A549 (cell line): ENCODE measurements at regions of chr17 and their contacts with region 1.

Region 1: DNA sequence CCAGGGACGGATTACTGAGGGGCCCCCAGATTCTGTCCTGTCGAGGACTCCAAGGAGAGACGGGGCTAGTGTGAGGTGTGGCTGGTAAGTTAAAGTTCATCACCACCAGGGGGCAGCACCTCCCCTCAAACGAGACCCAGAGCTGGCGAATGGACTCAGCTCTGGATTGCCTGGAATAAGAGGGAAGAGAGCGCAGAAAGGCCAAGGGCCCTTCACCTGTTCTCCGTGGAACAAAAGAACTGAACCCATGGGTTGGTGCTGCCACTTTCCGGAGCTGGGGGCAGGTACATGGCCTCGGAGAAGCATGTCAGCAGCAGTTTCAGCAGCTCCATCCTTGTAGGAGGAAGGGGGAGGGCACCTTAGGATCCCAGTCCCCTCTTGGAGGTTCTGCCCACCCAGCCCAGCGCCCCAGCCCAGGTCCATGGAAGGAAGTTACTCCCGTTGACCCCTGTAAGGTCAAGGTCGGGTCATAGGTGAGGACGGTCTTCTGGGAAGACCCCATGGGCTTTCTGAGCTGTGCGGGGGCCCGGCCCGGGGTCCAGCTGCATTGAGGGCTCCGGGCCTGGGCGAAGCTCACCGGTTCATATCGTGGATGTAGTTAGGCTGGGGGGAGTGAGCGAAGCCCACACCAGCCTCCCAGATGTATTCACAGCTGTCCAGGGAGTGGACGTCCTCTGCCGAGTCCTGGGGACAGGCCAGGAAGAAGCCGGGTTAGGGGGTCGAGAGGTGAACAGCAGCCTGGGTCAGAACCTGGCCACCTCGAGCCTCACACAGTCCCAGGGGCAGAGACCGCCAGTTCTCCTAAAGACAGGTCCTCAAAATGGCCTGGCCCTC is 10.7 kb downstream of the HID1 start:
- DNase-seq: peak; percentile 91 to 96
- ATAC-seq: peak; percentile 58 to 80
- H3K4me3 ChIP-seq: no peak overlapping the region
- H3K27ac ChIP-seq: 0 out of 6 replicates have a peak overlapping the region, but pooled peaks of 1 of the 2 experiments have one; percentile 9
- H3K4me1 ChIP-seq: peaks cover 12% of the 10 kb centered on the region
- CTCF ChIP-seq: peak; percentile 95
- EP300 ChIP-seq: no peak
- POLR2A ChIP-seq: no peak
- RAD21 ChIP-seq: peak; percentile 97 to 98

Region 2: GRCh38 chr17:74610108-74610507 is 351.8 kb before region 1 on chr17:
- CTCF ChIA-PET with region 1: no interaction called
- POLR2A ChIA-PET with region 1: no interaction called
- DNase-seq: no peak
- ATAC-seq: no peak
- H3K4me3 ChIP-seq: no peak overlapping the region
- H3K27ac ChIP-seq: no peak overlapping the region
- H3K4me1 ChIP-seq: peaks cover 9% of the 10 kb centered on the region
- CTCF ChIP-seq: no peak
- EP300 ChIP-seq: no peak
- POLR2A ChIP-seq: no peak
- RAD21 ChIP-seq: no peak

Region 3: DNA sequence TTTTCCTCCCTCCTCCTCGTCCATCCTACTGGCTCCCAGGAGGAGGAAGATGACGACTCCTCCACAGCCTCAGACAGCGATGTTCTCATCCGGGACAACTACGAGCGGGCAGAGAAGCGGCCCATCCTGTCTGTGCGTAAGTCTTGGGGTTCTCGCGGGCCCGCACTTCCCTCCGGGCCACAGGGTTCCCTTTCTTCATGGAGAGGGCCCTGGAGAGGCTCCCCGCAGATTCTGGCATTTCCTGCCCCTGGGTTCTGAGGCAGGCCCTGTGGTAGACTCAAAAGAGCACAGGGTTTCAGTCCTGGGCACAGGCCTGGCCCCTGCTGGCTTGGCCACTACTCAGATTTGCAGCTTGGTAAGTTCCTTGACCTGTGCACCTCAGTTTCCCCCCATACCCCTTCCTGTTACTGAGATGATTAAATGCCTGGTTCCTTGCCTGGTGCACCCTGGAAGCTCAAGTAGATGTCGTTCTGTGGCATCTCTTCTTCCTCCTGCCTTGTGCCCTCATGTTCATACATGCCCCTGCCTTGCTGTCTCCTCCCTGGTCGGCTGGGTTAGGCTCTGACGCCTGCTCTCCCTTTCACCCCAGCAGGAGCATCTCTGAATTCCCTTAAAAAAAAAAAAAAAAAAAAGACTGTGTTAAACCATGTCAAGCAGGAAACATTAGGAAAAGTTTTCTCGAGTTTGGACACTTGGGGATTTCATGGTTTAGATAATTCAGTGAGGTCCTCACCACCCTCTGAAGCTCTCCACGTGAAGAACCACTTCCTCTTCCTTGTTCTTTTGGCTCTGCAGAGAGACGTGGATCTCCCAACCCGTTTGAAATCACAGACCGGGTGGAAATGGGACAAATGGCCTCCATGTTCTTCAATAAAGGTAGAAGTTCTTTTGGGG is 171.5 kb before region 1 on chr17:
- CTCF ChIA-PET with region 1: interaction called, 21 read pairs
- POLR2A ChIA-PET with region 1: no interaction called
- DNase-seq: no peak
- ATAC-seq: no peak
- H3K4me3 ChIP-seq: no peak overlapping the region
- H3K27ac ChIP-seq: no peak overlapping the region
- H3K4me1 ChIP-seq: no peaks in the 10 kb centered on the region
- CTCF ChIP-seq: no peak
- EP300 ChIP-seq: no peak
- POLR2A ChIP-seq: no peak
- RAD21 ChIP-seq: no peak

Region 4: DNA sequence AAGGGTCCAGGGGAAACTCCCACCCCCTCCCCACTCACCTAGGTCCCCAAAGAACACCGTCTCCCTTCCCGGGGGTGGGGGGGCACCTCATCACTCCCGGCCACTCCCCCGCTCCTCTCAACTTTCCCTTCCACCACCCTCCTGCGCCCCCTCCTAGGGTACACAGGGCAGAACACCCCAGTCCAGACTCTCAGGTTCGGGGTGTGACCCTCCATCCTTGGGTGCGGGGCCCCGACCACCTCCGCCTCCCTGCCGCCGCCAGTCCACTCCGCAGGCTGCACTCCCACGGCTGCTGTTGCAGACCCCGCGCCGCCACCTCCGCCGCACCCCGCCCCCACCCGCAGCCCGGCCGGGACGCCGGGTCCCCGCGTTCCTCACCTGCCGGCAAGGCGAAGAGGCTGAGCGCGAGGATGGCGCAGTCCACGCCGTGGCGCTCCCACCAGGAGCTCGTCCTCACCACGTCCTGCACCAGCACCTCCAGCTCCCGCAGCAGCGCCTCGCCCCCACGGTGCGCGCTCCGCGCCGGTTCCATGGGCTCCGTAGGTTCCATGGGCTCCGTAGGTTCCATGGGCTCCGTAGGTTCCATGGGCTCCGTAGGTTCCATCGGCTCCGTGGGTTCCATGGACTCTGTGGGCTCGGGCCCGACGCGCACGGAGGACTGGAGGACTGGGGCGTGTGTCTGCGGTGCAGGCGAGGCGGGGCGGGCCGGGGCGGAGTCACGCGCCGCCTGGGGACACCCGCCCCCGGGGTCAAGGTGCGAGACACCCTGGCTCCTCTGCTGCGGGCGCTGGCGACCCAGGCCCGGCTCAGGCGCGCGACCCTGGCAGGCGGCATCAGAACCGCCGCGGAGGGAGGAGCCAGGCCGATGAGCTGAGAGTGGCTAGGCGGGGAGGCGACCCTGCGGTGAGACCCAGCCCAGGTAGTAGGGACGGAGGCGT is 68.6 kb before region 1 on chr17 and contains the start of gene FADS6:
- CTCF ChIA-PET with region 1: interaction called, 12 read pairs
- POLR2A ChIA-PET with region 1: no interaction called
- DNase-seq: no peak
- ATAC-seq: peak; percentile 32 to 65; a peak in 4 of 6 replicates
- H3K4me3 ChIP-seq: peak within 1 kb of the TSS; percentile 40
- H3K27ac ChIP-seq: peak within 1 kb of the TSS; percentile 30 to 59; a peak in 4 of 6 replicates
- H3K4me1 ChIP-seq: peaks cover 4% of the 10 kb centered on the region; the same call in 1 of the 3 replicates
- CTCF ChIP-seq: no peak
- EP300 ChIP-seq: no peak
- POLR2A ChIP-seq: no peak
- RAD21 ChIP-seq: no peak
- polyA plus RNA-seq, gene FADS6: not detected in 2 replicates

Region 5: GRCh38 chr17:74981979-74982662 is 20.2 kb after region 1 on chr17:
- CTCF ChIA-PET with region 1: interaction called, 280 read pairs
- POLR2A ChIA-PET with region 1: interaction called, 13 read pairs
- DNase-seq: peak; percentile 76 to 90
- ATAC-seq: peak; percentile 94
- H3K4me3 ChIP-seq: peak overlapping the region; percentile 69
- H3K27ac ChIP-seq: peak overlapping the region; percentile 92 to 94
- H3K4me1 ChIP-seq: peaks cover 23% of the 10 kb centered on the region
- CTCF ChIP-seq: peak; percentile 11; the same call in 1 of the 3 replicates
- EP300 ChIP-seq: no peak
- POLR2A ChIP-seq: peak; percentile 94
- RAD21 ChIP-seq: peak in 1 of 2 experiments; percentile 33; a peak in 1 of 5 replicates

Region 6: DNA sequence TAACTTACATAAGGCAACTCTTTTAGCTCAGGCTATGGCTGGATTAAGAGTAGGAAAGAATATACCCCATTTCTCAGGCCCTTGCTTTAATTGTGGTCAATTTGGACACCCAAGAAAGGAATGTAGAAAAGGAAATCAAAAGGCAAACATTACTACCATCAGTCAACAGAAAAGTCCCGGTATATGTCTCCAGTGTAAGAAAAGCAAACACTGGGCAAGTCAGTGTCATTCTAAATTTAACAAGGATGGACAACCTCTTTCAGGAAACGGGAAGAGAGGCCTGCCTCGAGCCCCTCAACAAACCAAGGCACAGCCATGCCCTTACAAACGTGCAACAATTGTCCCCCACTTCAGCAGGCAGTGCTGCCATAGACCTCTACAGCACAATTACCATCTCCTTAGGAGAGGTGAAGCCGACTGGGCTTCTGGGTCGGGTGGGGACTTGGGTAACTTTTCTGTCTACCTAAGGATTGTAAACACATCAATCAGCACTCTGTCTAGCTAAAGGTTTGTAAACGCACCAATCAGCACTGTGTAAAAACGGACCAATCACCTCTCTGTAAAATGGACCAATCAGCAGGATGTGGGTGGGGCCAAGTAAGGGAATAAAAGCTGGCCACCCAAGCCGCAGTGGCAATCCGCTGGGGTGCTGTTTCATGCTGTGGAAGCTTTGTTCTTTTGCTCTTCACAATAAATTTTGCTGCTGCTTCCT is 63.0 kb after region 1 on chr17:
- CTCF ChIA-PET with region 1: interaction called, 404 read pairs
- POLR2A ChIA-PET with region 1: no interaction called
- DNase-seq: no peak
- ATAC-seq: peak in 1 of 2 experiments; percentile 67; a peak in 3 of 6 replicates
- H3K4me3 ChIP-seq: no peak overlapping the region
- H3K27ac ChIP-seq: no peak overlapping the region
- H3K4me1 ChIP-seq: no peaks in the 10 kb centered on the region
- CTCF ChIP-seq: no peak
- EP300 ChIP-seq: no peak
- POLR2A ChIP-seq: no peak
- RAD21 ChIP-seq: no peak

Region 7: GRCh38 chr17:75124041-75124818 is 162.4 kb after region 1 on chr17:
- CTCF ChIA-PET with region 1: interaction called, 23 read pairs
- POLR2A ChIA-PET with region 1: no interaction called
- DNase-seq: peak; percentile 99 to 100
- ATAC-seq: peak; percentile 93
- H3K4me3 ChIP-seq: peak overlapping the region; percentile 31
- H3K27ac ChIP-seq: peak overlapping the region; percentile 92 to 97
- H3K4me1 ChIP-seq: peaks cover 61% of the 10 kb centered on the region
- CTCF ChIP-seq: no peak; the same call in 2 of the 3 replicates
- EP300 ChIP-seq: peak; percentile 30 to 80; a peak in 3 of 5 replicates
- POLR2A ChIP-seq: peak; percentile 62
- RAD21 ChIP-seq: peak; percentile 30 to 39; a peak in 4 of 5 replicates